Activated T-helper 1 cell treated with anti-CD3 and anti-CD28 coated beads, Interleukin-12 subunit alpha, Interleukin-12 subunit beta, Interleukin-2, Interleukin-4 antibody, amounts not matched to agents 30 ng/mL and 10 ng/mL and 1 ng/mL, durations not matched to agents 14 hours and 24 hours and 36 hours (primary cell): ENCODE measurements at regions of chr5 and their contacts with region 1.

Region 1: GRCh38 chr5:172059661-172060100 is 53.2 kb upstream of the FBXW11 start:
- DNase-seq: no peak
- H3K4me3 Mint-ChIP-seq: no peak overlapping the region
- H3K27ac Mint-ChIP-seq: peak overlapping the region; percentile 8
- H3K4me1 Mint-ChIP-seq: peaks cover 21% of the 10 kb centered on the region
- H3K27me3 Mint-ChIP-seq: no peaks in the 10 kb centered on the region

Region 2: DNA sequence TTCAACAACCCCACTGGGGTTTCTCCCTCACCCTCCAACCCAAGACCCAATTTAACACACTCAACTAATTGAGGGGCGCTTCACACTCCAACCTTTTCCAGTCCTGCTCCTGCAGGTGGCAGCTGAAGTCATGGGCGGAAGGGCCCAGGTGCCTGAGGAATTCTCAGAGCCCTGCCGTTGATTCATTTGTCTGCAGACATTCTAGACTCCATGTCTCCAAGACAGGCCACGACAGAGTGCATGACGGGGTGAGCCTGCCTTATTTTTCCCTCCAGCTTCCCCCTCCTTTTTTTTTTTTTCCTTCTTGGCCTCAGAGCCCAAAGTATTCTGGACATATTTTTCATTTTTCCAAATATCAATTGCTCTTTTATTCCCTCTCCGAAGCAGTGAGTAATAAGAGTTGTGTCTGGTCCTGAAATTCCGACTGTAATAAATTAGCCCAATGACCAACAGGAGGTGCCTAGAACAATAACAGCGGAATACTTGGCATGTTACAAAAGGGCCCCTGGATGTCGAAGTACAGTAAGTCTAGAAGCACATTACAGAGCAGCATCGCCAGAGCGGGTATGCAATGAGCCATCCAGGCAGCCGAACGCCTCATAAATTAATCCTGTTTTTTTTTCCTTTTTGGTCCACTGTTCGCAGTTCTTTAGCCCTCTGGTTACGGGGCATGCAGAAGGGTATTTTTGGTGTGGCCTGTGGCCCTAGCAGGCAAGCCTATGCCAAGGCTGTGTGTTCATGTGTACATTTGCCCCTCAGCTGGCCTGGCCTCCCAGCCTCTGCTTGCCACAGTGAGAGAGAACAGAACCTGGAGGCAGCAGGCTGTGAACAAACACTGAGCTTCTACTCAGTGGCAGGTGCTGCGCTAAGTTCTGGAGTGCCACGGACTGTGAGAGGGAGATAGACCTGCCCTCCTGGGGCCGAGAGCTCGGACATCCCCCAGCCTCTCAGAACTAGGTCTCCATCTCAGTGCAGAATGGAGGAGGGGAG is 282.6 kb before region 1 on chr5:
- intact Hi-C with region 1: no loop called
- DNase-seq: no peak
- H3K4me3 Mint-ChIP-seq: no peak overlapping the region
- H3K27ac Mint-ChIP-seq: no peak overlapping the region
- H3K4me1 Mint-ChIP-seq: no peaks in the 10 kb centered on the region
- H3K27me3 Mint-ChIP-seq: no peaks in the 10 kb centered on the region

Region 3: GRCh38 chr5:171913987-171914273 is 145.8 kb before region 1 on chr5:
- intact Hi-C with region 1: loop called (anchors 5 kb)
- DNase-seq: no peak
- H3K4me3 Mint-ChIP-seq: no peak overlapping the region
- H3K27ac Mint-ChIP-seq: no peak overlapping the region
- H3K4me1 Mint-ChIP-seq: peaks cover 33% of the 10 kb centered on the region
- H3K27me3 Mint-ChIP-seq: no peaks in the 10 kb centered on the region

Region 4: GRCh38 chr5:171931163-171931562 is 128.5 kb before region 1 on chr5:
- intact Hi-C with region 1: no loop called
- DNase-seq: no peak
- H3K4me3 Mint-ChIP-seq: no peak overlapping the region
- H3K27ac Mint-ChIP-seq: no peak overlapping the region
- H3K4me1 Mint-ChIP-seq: peaks cover 21% of the 10 kb centered on the region
- H3K27me3 Mint-ChIP-seq: no peaks in the 10 kb centered on the region

Region 5: GRCh38 chr5:172007175-172008110 is 52.2 kb before region 1 on chr5:
- intact Hi-C with region 1: no loop called
- DNase-seq: peak; percentile 12
- H3K4me3 Mint-ChIP-seq: peak overlapping the region; percentile 95
- H3K27ac Mint-ChIP-seq: peak overlapping the region; percentile 93
- H3K4me1 Mint-ChIP-seq: peaks cover 50% of the 10 kb centered on the region
- H3K27me3 Mint-ChIP-seq: no peaks in the 10 kb centered on the region